Activated naive CD8-positive, alpha-beta T cell treated with anti-CD3 and anti-CD28 coated beads, Interleukin-2, amount 10 ng/mL, durations not matched to agents 7 days and 5 days (primary cell): ENCODE measurements at regions of chr9 and their contacts with region 1.

Region 1: DNA sequence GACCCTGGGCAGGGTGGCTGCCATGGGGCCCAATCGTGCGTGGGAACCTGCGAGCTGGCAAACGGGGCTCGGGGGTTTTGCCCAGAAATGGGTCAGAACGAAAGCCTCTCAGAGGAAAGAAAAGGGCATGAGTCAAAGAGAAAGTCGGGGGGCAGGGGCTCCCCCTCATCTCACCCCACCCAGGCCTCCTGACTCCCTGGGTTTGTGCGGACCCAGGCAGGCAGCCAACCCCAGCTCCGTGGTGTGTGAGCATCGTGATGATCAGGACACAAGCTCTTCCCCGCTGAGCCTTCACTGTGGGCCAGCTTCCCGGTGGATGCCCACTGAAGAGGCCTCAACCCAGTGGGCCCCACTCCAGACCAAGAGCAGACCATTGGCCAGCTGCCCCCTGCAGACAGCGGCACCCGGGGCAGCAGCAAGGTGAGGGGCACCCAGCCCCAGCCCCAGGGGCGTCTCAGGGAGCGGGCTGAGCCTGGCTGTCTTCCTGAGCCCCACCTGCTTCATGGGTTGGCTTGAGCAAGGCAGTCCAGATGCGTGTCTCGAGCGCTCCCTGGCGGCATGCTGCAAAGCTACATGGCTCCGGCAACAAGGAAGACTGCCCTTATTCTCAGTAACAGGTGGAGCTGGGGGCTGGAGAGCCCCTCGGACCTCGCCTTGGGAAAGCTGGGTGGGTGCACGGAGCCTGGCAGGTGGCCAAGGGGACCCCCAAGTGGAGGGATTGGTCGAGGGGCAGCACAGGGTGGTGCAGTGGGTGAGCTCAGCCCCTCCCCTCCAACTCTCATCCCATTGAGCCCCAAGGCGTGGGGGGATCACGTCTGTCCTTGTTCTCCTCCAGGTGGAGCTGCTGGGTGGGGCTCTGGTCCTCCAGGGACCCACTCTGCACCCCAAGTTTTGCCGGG is 3.2 kb upstream of the FUT7 start:
- DNase-seq: peak; percentile 92
- ATAC-seq: peak; percentile 87
- H3K4me3 Mint-ChIP-seq: peak overlapping the region; percentile 55
- H3K27ac Mint-ChIP-seq: peak overlapping the region; percentile 79
- H3K4me1 Mint-ChIP-seq: peaks cover 20% of the 10 kb centered on the region
- H3K27me3 Mint-ChIP-seq: no peaks in the 10 kb centered on the region

Region 2: GRCh38 chr9:136769710-136770191 is 265.4 kb before region 1 on chr9:
- POLR2A ChIA-PET with region 1: no interaction called
- DNase-seq: peak; percentile 68
- ATAC-seq: peak; percentile 72
- H3K4me3 Mint-ChIP-seq: no peak overlapping the region
- H3K27ac Mint-ChIP-seq: no peak overlapping the region
- H3K4me1 Mint-ChIP-seq: peaks cover 14% of the 10 kb centered on the region
- H3K27me3 Mint-ChIP-seq: peaks cover 15% of the 10 kb centered on the region

Region 3: GRCh38 chr9:136949817-136950655 is 85.1 kb before region 1 on chr9:
- POLR2A ChIA-PET with region 1: interaction called, 15 read pairs
- DNase-seq: peak; percentile 96
- ATAC-seq: peak; percentile 96
- H3K4me3 Mint-ChIP-seq: peak overlapping the region; percentile 89
- H3K27ac Mint-ChIP-seq: peak overlapping the region; percentile 90
- H3K4me1 Mint-ChIP-seq: peaks cover 1% of the 10 kb centered on the region
- H3K27me3 Mint-ChIP-seq: no peaks in the 10 kb centered on the region

Region 4: GRCh38 chr9:137000177-137000883 is 34.8 kb before region 1 on chr9:
- POLR2A ChIA-PET with region 1: interaction called, 10 read pairs
- DNase-seq: peak; percentile 58
- ATAC-seq: peak; percentile 59
- H3K4me3 Mint-ChIP-seq: peak overlapping the region; percentile 65
- H3K27ac Mint-ChIP-seq: peak overlapping the region; percentile 82
- H3K4me1 Mint-ChIP-seq: peaks cover 28% of the 10 kb centered on the region
- H3K27me3 Mint-ChIP-seq: peaks cover 12% of the 10 kb centered on the region